ENCODE measurements at regions of chr12 and their contacts with region 1.

Region 1: GRCh38 chr12:16165506-16165905 is 112.0 kb downstream of the SLC15A5 start:
- DNase-seq: peak; percentile 56
- H3K4me3 Mint-ChIP-seq: no peak overlapping the region
- H3K27ac Mint-ChIP-seq: no peak overlapping the region
- H3K4me1 Mint-ChIP-seq: no peaks in the 10 kb centered on the region
- H3K27me3 Mint-ChIP-seq: no peaks in the 10 kb centered on the region
- CTCF ChIP-seq: peak; percentile 55

Region 2: DNA sequence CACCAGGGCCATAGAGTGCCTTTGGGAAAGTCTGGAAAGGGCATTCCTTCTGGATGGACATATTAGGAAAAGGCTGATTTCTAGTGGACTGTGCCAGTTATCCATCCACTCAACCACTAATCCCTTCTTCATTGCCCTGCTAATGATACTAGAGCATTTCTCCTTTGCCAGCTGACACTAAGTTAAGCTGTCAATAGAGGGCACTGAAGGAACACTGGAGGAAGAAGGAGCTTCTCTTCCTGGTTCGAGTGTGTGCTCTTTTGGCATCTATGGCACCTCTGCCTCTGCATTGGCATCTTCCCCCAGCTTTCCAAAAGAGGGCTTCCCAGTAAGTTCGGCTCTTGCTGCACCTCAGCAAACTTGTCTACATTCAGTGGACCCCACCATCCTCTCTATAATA is 89.0 kb before region 1 on chr12:
- CTCF ChIA-PET with region 1: no interaction called
- intact Hi-C with region 1: loop called (anchors 5 kb)
- DNase-seq: peak; percentile 34
- H3K4me3 Mint-ChIP-seq: no peak overlapping the region
- H3K27ac Mint-ChIP-seq: no peak overlapping the region
- H3K4me1 Mint-ChIP-seq: no peaks in the 10 kb centered on the region
- H3K27me3 Mint-ChIP-seq: no peaks in the 10 kb centered on the region
- CTCF ChIP-seq: peak; percentile 38

Region 3: GRCh38 chr12:16359512-16360491 is 194.3 kb after region 1 on chr12:
- CTCF ChIA-PET with region 1: interaction called, 3 read pairs
- intact Hi-C with region 1: loop called (anchors 1 kb)
- DNase-seq: peak; percentile 75
- H3K4me3 Mint-ChIP-seq: no peak overlapping the region
- H3K27ac Mint-ChIP-seq: no peak overlapping the region
- H3K4me1 Mint-ChIP-seq: peaks cover 11% of the 10 kb centered on the region
- H3K27me3 Mint-ChIP-seq: no peaks in the 10 kb centered on the region
- CTCF ChIP-seq: peak; percentile 90

Region 4: DNA sequence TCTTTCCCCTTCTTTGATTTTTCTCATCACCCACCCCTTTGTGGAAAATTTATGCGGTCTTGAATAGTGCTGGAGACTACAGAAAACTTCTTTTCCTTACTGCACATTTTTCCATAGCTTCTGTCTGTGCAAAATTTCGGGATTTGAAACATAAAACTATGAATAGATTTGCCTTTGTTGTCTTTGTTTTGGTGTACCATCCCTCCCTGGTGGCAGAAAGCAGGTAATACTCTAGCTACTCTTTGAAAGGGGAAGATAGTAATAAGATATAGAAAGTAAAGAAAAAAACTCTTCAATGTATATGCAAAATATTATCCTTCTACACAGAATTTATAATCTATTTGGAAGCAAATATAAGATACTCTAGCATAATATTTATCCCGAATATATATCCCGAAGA is 519.6 kb after region 1 on chr12:
- CTCF ChIA-PET with region 1: no interaction called
- intact Hi-C with region 1: loop called (anchors 5 kb)
- DNase-seq: no peak
- H3K4me3 Mint-ChIP-seq: no peak overlapping the region
- H3K27ac Mint-ChIP-seq: no peak overlapping the region
- H3K4me1 Mint-ChIP-seq: no peaks in the 10 kb centered on the region
- H3K27me3 Mint-ChIP-seq: no peaks in the 10 kb centered on the region
- CTCF ChIP-seq: no peak

Measured in Calu3 (cell line).